ENCODE measurements at regions of chr3 and their contacts with region 1.

Region 1: GRCh38 chr3:78659386-78659987 is 1108.3 kb downstream of the ROBO1 start:
- DNase-seq: peak in 1 of 2 donors; percentile 28
- ATAC-seq: no peak
- H3K4me3 ChIP-seq: no peak overlapping the region
- H3K27ac ChIP-seq: no peak overlapping the region
- H3K4me1 ChIP-seq: no peaks in the 10 kb centered on the region
- H3K27me3 ChIP-seq: no peaks in the 10 kb centered on the region
- CTCF ChIP-seq: peak; percentile 50 to 75 (median 70)

Region 2: DNA sequence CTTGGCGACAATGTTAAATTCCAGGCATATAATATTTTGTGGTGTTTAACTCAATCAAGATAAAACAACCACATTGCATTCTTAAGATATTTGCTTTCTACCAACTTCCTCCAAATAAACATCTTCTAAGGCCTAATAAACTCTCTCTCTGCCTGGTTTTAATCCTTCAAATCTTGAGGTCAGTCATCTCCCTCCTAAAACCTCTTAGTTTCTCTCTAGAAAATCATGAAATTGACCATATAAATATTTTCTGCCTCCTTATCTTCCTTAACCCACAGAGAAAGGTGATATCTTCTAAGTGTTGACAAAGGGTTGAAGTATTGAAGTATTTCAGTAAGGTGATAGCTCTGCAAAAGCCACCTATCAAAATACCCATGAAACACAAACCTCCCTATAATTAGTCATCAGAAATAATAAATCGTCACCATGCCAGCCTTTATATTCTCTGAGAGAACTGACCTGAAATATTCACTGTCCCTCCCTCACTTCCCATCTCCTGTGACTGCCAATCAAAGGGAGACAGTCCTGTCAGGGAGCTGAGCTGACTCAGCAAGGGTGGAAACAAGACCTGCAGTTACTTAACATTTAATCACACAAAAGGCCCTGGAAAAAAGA is 152.8 kb before region 1 on chr3:
- intact Hi-C with region 1: no loop called
- DNase-seq: no peak
- ATAC-seq: no peak
- H3K4me3 ChIP-seq: no peak overlapping the region
- H3K27ac ChIP-seq: no peak overlapping the region
- H3K4me1 ChIP-seq: no peaks in the 10 kb centered on the region
- H3K27me3 ChIP-seq: no peaks in the 10 kb centered on the region
- CTCF ChIP-seq: no peak

Region 3: GRCh38 chr3:79019137-79019923 is 359.8 kb after region 1 on chr3:
- intact Hi-C with region 1: loop called in 2 of 10 experiments (anchors 5 to 10 kb)
- DNase-seq: peak; percentile 68 to 75
- ATAC-seq: peak; percentile 87 to 95 (median 90)
- H3K4me3 ChIP-seq: peak overlapping the region; percentile 58 to 88 (median 68)
- H3K27ac ChIP-seq: peak overlapping the region; percentile 73 to 89 (median 81)
- H3K4me1 ChIP-seq: peaks cover 0 to 13% (median 5%) of the 10 kb centered on the region in 9 donors
- H3K27me3 ChIP-seq: peaks cover 0 to 39% (median 26%) of the 10 kb centered on the region in 7 donors
- CTCF ChIP-seq: no peak

Region 4: DNA sequence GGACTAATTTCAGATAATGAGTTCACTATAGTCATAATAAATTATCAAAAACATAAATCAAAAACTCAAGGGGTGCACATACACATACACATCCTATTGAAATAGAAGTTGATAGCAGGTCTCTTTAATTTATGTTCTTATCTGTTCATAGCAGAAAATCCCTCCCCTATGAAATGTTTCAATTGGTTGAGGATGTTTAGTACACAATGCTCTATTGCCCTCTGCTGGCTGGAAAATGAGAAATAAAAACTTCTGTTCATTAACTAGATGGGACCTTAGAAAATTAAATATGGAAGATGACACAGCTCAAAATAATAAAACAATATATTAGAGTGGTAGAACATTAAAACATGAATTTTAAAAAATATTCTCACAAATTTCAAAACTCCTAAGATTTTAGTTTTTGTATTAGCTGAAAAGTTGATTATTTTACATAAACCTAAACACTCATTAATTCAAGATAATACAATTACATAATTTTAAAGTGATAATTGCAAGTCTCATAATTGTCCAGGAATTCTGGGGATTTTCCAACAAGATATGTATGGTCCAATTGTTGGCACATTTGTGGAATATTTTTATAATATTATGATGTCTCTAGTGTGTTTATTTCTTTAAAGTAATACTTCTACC is 373.3 kb after region 1 on chr3:
- intact Hi-C with region 1: loop called in 9 of 10 experiments (anchors 2 to 10 kb)
- DNase-seq: peak in 1 of 2 donors; percentile 23
- ATAC-seq: no peak
- H3K4me3 ChIP-seq: no peak overlapping the region
- H3K27ac ChIP-seq: no peak overlapping the region
- H3K4me1 ChIP-seq: no peaks in the 10 kb centered on the region
- H3K27me3 ChIP-seq: no peaks in the 10 kb centered on the region
- CTCF ChIP-seq: peak; percentile 19 to 67 (median 56)

Region 5: GRCh38 chr3:79361748-79362378 is 702.4 kb after region 1 on chr3:
- intact Hi-C with region 1: loop called in 6 of 10 experiments (anchors 5 to 10 kb)
- DNase-seq: peak in 1 of 2 donors; percentile 6
- ATAC-seq: peak in 1 of 8 donors; percentile 42
- H3K4me3 ChIP-seq: peak overlapping the region in 1 of 10 donors; percentile 14
- H3K27ac ChIP-seq: peak overlapping the region in 3 of 10 donors; percentile 24 to 45 (median 38)
- H3K4me1 ChIP-seq: no peaks in the 10 kb centered on the region
- H3K27me3 ChIP-seq: peaks cover 0 to 17% (median 0%) of the 10 kb centered on the region in 7 donors
- CTCF ChIP-seq: peak; percentile 42 to 79 (median 73)

Region 6: DNA sequence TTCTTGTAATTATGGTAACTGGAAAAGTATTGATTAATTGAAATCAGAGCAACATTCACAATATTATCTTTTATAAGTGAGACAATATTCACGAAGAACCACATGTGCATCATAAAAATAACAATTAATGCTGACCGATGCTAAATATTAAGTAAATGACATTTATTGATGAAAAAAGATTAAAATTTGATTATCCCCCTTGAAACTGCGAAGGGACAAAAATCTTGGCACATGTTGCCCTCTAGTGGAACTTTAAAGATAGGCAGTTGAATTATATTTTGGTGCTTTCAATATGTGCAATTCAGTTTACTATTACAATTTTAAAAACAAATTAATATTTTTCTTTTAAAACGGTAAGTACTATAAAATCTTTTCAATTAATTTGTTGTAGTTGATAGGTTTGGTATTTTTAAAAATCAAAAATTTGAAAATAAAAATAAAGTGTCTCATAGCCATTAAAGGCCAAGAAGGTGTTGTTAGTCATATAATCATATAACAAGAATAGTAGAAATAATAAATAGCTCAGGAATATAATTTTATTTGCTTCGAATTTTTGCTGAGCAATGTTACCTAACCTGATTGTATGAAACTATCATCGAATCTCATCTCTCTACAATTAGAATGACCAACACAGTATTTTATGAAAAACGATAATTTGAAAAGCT is 838.1 kb after region 1 on chr3:
- intact Hi-C with region 1: loop called in 5 of 10 experiments (anchors 5 to 10 kb)
- DNase-seq: no peak
- ATAC-seq: no peak
- H3K4me3 ChIP-seq: no peak overlapping the region
- H3K27ac ChIP-seq: no peak overlapping the region
- H3K4me1 ChIP-seq: no peaks in the 10 kb centered on the region
- H3K27me3 ChIP-seq: no peaks in the 10 kb centered on the region
- CTCF ChIP-seq: peak; percentile 43 to 68 (median 59)